AG04449 (cell line): ENCODE measurements at regions of chr12 and their contacts with region 1.

Region 1: DNA sequence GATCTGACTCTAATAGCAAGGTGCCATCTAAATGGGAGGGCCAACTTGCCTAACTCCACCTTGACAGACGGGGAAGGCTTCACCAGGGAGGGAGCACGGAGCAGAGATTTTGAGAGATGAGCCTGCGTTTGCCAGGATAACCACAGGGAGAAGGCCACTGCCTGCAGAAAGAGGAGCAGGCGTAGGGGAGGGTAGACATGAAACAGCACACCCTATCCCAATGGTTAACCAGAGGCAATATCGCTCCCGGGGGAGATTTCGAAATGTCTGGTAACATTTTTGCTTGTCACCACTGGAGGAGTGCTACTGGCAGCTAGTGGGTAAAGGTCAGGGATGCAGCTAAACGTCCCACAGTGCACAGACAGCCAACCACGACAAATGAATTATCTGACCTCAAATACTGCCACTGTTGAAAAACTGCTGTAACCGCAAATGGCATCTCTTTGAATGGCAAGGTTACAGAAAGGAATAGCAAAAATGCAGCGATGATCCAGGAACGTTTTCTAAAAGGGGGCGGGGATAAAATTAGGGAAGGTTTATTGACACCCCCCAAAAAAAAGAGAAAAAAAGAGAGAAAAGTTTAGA is 126.0 kb upstream of the ATF7IP start:
- DNase-seq: no peak
- H3K4me3 ChIP-seq: no peak overlapping the region; the same call in 1 of the 2 replicates
- CTCF ChIP-seq: no peak

Region 2: DNA sequence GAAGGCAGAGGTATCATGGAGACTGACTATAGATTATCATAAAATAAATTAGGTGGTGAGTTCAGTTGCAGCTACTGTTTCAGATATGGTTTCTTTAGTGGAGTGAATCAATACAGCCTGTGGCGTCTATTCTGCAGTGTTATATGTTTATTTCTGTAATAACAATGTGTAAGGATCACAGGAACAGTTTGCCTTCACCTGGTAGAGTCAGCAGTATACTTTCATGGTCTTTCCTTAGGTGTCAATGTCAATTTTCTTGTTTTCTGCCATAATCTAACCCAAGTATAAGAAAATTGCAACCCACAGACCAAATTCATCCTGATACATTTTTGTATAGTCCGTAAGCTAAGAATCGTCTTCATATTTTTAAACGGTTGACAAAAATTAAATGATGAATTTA is 14.4 kb before region 1 on chr12:
- CTCF ChIA-PET with region 1: interaction called, 16 read pairs
- POLR2A ChIA-PET with region 1: no interaction called
- DNase-seq: no peak
- H3K4me3 ChIP-seq: no peak overlapping the region
- CTCF ChIP-seq: no peak

Region 3: DNA sequence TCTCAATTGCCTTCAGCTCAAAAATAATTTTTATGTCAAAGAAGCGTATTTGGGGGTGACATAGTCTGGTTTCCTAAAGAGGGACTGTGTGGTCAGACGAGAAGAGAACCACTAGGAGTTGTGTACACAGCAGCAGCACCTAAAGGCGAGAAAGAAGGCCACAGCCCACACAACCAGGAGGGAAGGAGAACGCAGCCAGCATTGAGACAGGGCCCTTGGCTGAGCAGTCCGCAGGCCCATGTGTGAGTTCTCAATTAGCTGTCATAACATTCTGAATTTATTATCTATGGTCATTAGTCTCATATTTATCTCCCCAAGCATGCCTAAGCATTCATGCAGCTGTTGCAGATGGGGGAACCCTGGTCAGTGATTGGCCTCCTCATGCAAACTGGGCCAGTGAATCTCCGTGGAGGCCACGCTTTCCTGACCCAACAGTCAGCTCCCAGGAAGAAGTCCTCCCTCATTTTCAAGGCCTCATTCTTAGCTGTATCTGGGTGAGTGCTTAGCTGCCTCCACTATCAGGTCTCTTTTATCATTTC is 44.8 kb after region 1 on chr12:
- CTCF ChIA-PET with region 1: no interaction called
- POLR2A ChIA-PET with region 1: no interaction called
- DNase-seq: no peak
- H3K4me3 ChIP-seq: no peak overlapping the region
- CTCF ChIP-seq: no peak

Region 4: DNA sequence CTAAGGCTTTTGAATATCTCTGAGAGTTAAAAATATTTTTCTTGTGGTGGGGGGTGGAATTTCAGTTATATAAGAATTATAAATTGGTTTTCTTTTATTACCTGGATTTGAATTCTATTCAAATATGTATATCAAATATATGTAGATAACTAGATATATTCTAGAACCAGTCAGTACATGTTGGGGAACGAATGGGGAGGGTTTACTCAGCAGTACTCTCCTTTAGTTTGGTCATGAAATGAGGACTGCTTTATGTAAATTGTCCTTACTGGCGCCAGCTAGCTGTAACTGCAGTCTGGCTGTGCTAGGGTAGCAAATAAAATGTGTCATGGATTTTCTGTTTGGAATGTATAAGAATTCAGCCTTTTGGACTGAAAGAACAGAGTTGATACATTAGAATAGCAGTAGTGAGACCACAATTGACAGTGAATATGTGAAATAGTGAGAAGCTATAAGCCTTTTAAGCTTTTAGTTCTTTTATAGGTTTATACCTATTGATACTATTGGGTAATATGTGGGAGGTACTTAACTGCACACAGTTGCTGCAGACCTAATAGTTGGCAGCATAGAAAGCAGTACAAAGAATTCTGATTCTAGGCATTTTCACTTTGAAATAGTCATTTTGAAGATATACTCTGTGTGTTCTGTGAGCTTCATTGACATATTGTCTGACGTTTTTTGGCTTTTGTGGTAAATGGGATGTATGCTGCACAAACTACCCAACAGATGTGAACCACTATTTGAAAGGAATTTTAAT is 155.1 kb after region 1 on chr12:
- CTCF ChIA-PET with region 1: interaction called, 12 read pairs
- POLR2A ChIA-PET with region 1: no interaction called
- DNase-seq: peak; percentile 46
- H3K4me3 ChIP-seq: no peak overlapping the region
- CTCF ChIP-seq: no peak

Region 5: DNA sequence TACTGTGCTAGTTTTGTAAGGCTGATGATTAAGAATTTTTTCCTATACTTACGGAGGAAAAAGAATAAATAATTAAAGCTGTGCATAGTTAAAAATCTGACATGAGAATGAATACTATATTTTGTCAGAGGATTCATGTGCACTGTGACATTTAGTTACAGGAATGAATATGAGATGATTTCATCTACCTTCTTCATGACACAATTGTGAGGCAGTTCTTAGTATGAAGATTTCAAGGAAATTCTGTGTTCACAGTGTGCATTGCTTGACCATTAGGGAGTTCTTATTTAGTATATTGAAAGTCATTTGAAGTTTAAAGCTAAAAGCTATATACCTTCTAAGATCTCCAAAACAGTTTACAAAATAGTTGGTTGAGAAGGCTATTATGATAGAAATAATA is 196.2 kb after region 1 on chr12:
- CTCF ChIA-PET with region 1: interaction called, 10 read pairs
- POLR2A ChIA-PET with region 1: no interaction called
- DNase-seq: no peak
- H3K4me3 ChIP-seq: no peak overlapping the region
- CTCF ChIP-seq: no peak

Region 6: GRCh38 chr12:14613718-14614117 is 374.3 kb after region 1 on chr12:
- CTCF ChIA-PET with region 1: interaction called, 94 read pairs
- POLR2A ChIA-PET with region 1: no interaction called
- DNase-seq: no peak
- H3K4me3 ChIP-seq: no peak overlapping the region
- CTCF ChIP-seq: no peak

Region 7: GRCh38 chr12:14664510-14664909 is 425.1 kb after region 1 on chr12:
- CTCF ChIA-PET with region 1: interaction called, 49 read pairs
- POLR2A ChIA-PET with region 1: no interaction called
- DNase-seq: no peak
- H3K4me3 ChIP-seq: no peak overlapping the region
- CTCF ChIP-seq: peak; percentile 15